Calu3 (cell line): ENCODE measurements at regions of chr20 and their contacts with region 1.

Region 1: GRCh38 chr20:53828682-53829254 is 235.1 kb upstream of the ZNF217 start:
- DNase-seq: peak; percentile 27
- H3K4me3 Mint-ChIP-seq: peak overlapping the region; percentile 64
- H3K27ac Mint-ChIP-seq: peak overlapping the region; percentile 98
- H3K4me1 Mint-ChIP-seq: peaks cover 55% of the 10 kb centered on the region
- H3K27me3 Mint-ChIP-seq: no peaks in the 10 kb centered on the region
- CTCF ChIP-seq: no peak

Region 2: GRCh38 chr20:53805895-53806384 is 22.8 kb before region 1 on chr20:
- CTCF ChIA-PET with region 1: no interaction called
- intact Hi-C with region 1: no loop called
- DNase-seq: peak; percentile 57
- H3K4me3 Mint-ChIP-seq: no peak overlapping the region
- H3K27ac Mint-ChIP-seq: peak overlapping the region; percentile 65
- H3K4me1 Mint-ChIP-seq: peaks cover 44% of the 10 kb centered on the region
- H3K27me3 Mint-ChIP-seq: no peaks in the 10 kb centered on the region
- CTCF ChIP-seq: no peak

Region 3: DNA sequence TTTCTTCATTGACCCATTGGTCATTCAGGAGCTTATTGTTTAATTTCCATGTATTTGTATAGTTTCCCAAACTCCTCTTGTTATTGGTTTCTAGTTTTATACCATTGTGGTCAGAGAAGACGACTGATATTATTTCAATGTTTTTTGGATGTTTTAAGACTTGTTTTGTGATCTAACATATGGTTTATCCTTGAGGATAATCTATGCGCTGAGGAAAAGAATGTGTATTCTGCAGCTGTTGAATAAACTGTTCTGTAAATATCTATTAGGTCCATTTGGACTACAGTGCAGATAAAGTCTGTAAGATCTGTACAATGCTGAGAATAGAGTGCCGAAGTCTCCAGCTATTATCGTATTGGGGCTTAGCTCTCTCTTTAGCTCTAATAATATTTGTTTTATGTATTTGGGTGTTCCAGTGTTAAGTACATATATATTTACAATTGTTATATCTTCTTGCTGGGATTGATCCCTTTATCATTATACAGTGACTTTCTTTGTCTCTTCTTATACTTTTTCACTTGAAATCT is 11.8 kb before region 1 on chr20:
- CTCF ChIA-PET with region 1: no interaction called
- intact Hi-C with region 1: no loop called
- DNase-seq: no peak
- H3K4me3 Mint-ChIP-seq: no peak overlapping the region
- H3K27ac Mint-ChIP-seq: no peak overlapping the region
- H3K4me1 Mint-ChIP-seq: no peaks in the 10 kb centered on the region
- H3K27me3 Mint-ChIP-seq: no peaks in the 10 kb centered on the region
- CTCF ChIP-seq: no peak

Region 4: DNA sequence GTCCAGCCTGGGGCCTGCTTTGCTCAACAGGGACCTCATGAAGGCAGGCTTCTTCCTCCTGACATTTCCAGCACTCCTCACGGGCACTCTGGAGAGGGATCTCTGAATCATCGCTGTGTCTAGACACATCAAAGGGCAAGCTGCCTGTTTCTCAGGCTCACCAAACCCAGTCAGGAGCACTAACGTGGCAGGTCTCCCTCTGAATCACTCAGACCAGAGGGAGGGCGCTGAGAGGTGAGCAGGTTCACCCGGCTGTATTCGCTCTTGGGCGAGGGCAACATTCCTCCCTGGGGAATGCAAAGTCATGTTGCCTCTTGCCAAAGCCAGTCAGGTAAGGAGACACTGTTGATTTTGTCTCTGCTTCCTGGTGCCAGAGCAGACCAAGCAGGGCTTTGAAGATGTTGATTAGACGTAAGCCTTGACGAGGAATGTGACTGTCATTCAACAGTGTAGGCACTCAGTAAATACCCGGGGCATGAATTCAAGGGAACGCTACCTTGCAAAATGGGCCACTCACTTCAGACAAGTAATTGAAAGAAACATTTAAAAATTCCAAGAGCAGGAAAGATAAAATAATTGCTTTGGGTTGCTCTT is 294.9 kb after region 1 on chr20:
- CTCF ChIA-PET with region 1: no interaction called
- intact Hi-C with region 1: loop called (anchors 5 kb)
- DNase-seq: peak; percentile 99
- H3K4me3 Mint-ChIP-seq: peak overlapping the region; percentile 33
- H3K27ac Mint-ChIP-seq: peak overlapping the region; percentile 96
- H3K4me1 Mint-ChIP-seq: peaks cover 75% of the 10 kb centered on the region
- H3K27me3 Mint-ChIP-seq: no peaks in the 10 kb centered on the region
- CTCF ChIP-seq: no peak